ENCODE measurements at regions of chr21 and their contacts with region 1.

Region 1: DNA sequence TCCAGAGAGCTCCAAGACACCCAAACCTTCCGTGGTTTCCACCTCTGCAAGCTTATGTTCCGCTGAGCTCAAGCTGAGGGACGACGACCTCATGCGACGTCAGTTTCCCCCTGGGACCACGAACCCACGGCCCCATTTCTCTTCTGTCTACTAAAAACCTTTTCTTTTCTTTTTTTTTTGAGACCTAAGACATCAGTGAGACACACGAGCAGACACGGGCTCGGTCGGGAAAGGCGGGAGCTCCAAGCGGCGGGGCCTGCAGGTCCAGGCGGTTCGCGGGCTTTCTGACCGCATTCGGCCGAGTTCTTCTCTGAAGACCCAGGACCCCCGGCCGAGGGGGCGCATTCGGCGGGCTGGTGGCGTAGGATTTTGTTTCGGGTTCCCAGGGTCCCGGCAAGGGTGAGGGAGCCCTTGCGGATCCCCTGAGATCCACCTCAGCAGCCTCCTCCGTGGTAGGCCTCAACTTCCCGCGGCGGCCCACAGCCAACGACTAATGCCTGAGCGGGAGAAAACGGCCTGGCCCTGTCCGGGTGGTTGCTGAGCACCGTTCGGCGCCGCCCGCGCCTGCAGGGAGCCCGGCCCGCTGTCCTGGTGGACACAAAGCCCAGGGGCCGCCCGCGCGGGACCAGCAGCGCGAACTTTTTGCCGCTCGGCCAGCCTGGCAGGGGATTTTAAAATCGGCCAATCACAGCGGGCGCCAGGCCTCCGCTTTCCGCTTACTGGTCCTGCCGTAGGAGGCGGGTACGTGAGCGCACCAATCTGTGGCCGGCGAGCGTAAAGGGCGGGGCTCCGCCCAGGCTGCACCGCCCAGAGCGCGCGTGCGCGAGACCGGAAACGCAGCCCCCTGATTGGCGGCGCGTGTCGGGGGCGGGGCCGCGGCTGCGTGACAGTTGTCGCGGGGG is at the start of gene C21orf58:
- DNase-seq: peak; percentile 97 to 98 (median 98)
- H3K4me3 ChIP-seq: peak within 1 kb of the TSS; percentile 83 to 100 (median 96)
- H3K4me3 Mint-ChIP-seq: peak within 1 kb of the TSS; percentile 95 to 96
- H3K27ac ChIP-seq: peak within 1 kb of the TSS; percentile 94
- H3K27ac Mint-ChIP-seq: peak within 1 kb of the TSS; percentile 93 to 99 (median 99)
- H3K4me1 ChIP-seq: peaks cover 43 to 47% of the 10 kb centered on the region in 2 donors
- H3K4me1 Mint-ChIP-seq: peaks cover 47% of the 10 kb centered on the region
- H3K27me3 ChIP-seq: no peaks in the 10 kb centered on the region
- H3K27me3 Mint-ChIP-seq: peaks cover 0 to 3% (median 0%) of the 10 kb centered on the region in 3 donors
- CTCF ChIP-seq: no peak
- polyA plus RNA-seq, gene C21orf58: 0.15 to 0.73 (median 0.21) TPM

Region 2: GRCh38 chr21:46184625-46185555 is 138.6 kb before region 1 on chr21:
- intact Hi-C with region 1: loop called (anchors 5 to 10 kb)
- DNase-seq: peak; percentile 66 to 82 (median 78)
- H3K4me3 ChIP-seq: peak overlapping the region; percentile 49 to 80 (median 63)
- H3K4me3 Mint-ChIP-seq: peak overlapping the region; percentile 85 to 90
- H3K27ac ChIP-seq: peak overlapping the region; percentile 68 to 80
- H3K27ac Mint-ChIP-seq: peak overlapping the region; percentile 89 to 96 (median 95)
- H3K4me1 ChIP-seq: peaks cover 4 to 5% of the 10 kb centered on the region in 2 donors
- H3K4me1 Mint-ChIP-seq: peaks cover 15% of the 10 kb centered on the region
- H3K27me3 ChIP-seq: no peaks in the 10 kb centered on the region
- H3K27me3 Mint-ChIP-seq: peaks cover 0 to 2% (median 0%) of the 10 kb centered on the region in 3 donors
- CTCF ChIP-seq: no peak

Region 3: DNA sequence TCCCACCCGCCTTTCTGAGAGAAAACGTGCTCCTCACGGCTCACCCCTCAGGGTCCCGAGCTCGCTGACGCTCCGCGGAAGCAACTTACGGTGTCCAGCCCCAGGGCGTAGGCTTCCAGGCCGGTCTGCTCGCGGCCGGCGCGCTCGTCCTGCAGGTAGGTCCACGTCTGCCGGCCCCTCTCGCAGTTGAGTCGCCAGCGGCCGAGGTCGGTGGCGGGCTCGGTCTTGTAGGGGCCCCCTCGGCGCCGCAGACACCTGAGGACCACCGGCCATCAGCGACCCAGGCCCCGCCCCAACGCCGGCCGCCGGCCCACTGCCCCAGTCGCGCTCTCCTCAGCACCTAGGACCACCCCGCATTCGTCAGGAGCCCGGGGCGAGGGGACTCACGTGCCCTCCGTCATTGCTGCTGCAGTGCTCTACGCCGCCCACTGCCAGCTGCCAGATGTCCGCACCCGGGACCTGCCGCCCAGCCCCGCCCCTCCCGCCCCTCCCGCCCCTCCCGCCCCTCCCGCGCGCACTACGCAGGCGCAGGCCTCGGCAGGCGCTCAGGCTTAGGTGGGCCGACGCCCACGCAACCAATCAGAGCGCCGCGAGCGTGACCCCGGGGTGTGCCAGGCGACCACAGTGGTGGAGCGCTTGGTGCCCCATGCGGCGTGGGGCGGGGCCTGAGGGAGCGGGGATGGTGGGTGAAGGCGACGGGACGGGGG is 95.0 kb before region 1 on chr21 and contains the start of gene LSS:
- intact Hi-C with region 1: loop called (anchors 2 to 5 kb)
- DNase-seq: peak; percentile 88 to 97 (median 95)
- H3K4me3 ChIP-seq: peak within 1 kb of the TSS; percentile 62 to 90 (median 64)
- H3K4me3 Mint-ChIP-seq: peak within 1 kb of the TSS; percentile 95 to 99
- H3K27ac ChIP-seq: peak within 1 kb of the TSS in 1 of 2 donors; percentile 68
- H3K27ac Mint-ChIP-seq: peak within 1 kb of the TSS; percentile 47 to 89 (median 85)
- H3K4me1 ChIP-seq: peaks cover 17 to 24% of the 10 kb centered on the region in 2 donors
- H3K4me1 Mint-ChIP-seq: peaks cover 34% of the 10 kb centered on the region
- H3K27me3 ChIP-seq: no peaks in the 10 kb centered on the region
- H3K27me3 Mint-ChIP-seq: peaks cover 2 to 7% (median 2%) of the 10 kb centered on the region in 3 donors
- CTCF ChIP-seq: no peak
- polyA plus RNA-seq, gene LSS: 4.1 to 20.0 (median 4.9) TPM

Region 4: GRCh38 chr21:46285761-46286496 is 37.5 kb before region 1 on chr21 and contains the start of gene YBEY:
- intact Hi-C with region 1: loop called (anchors 1 to 5 kb)
- DNase-seq: peak; percentile 79 to 84 (median 81)
- H3K4me3 ChIP-seq: peak within 1 kb of the TSS; percentile 58 to 95 (median 73)
- H3K4me3 Mint-ChIP-seq: peak within 1 kb of the TSS; percentile 89 to 93
- H3K27ac ChIP-seq: peak within 1 kb of the TSS; percentile 85 to 89
- H3K27ac Mint-ChIP-seq: peak within 1 kb of the TSS; percentile 82 to 96 (median 95)
- H3K4me1 ChIP-seq: peaks cover 42 to 55% of the 10 kb centered on the region in 2 donors
- H3K4me1 Mint-ChIP-seq: peaks cover 50% of the 10 kb centered on the region
- H3K27me3 ChIP-seq: no peaks in the 10 kb centered on the region
- H3K27me3 Mint-ChIP-seq: peaks cover 0 to 2% (median 0%) of the 10 kb centered on the region in 3 donors
- CTCF ChIP-seq: no peak
- polyA plus RNA-seq, gene YBEY: 4.1 to 8.6 (median 5.2) TPM

Region 5: GRCh38 chr21:46458315-46459023 is 135.0 kb after region 1 on chr21 and contains the start of gene DIP2A:
- intact Hi-C with region 1: loop called in 1 of 2 experiments (anchors 5 kb)
- DNase-seq: peak; percentile 93 to 97 (median 97)
- H3K4me3 ChIP-seq: peak within 1 kb of the TSS; percentile 88 to 99 (median 96)
- H3K4me3 Mint-ChIP-seq: peak within 1 kb of the TSS; percentile 91 to 93
- H3K27ac ChIP-seq: peak within 1 kb of the TSS; percentile 88 to 93
- H3K27ac Mint-ChIP-seq: peak within 1 kb of the TSS; percentile 87 to 98 (median 93)
- H3K4me1 ChIP-seq: peaks cover 25 to 45% of the 10 kb centered on the region in 2 donors
- H3K4me1 Mint-ChIP-seq: peaks cover 51% of the 10 kb centered on the region
- H3K27me3 ChIP-seq: no peaks in the 10 kb centered on the region
- H3K27me3 Mint-ChIP-seq: peaks cover 0 to 3% (median 0%) of the 10 kb centered on the region in 3 donors
- CTCF ChIP-seq: no peak
- polyA plus RNA-seq, gene DIP2A: 4.6 to 55.4 (median 6.1) TPM

Region 6: DNA sequence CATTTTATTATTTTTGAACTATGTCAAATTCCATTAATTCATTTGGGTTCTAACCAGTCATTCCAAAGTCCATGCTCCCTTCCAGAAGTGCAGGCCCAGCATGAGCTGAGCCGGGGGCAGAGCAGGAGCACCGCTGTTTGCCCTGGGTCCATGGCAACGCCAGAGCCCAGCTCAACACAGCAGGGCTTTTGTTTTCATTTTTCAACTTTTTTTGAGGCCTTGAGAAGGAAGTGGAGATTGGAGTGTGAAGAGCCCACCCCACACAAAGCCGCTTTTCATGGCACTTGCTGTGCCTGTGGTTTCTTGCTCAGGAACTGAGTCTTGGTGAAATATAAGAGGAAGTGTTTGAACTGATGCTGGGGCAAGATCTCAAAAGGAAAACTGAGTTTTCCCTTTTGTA is 298.7 kb after region 1 on chr21:
- intact Hi-C with region 1: no loop called
- DNase-seq: peak; percentile 61 to 70 (median 65)
- H3K4me3 ChIP-seq: peak overlapping the region in 1 of 3 experiments; percentile 23
- H3K4me3 Mint-ChIP-seq: peak overlapping the region; percentile 20 to 71
- H3K27ac ChIP-seq: peak overlapping the region; percentile 77 to 84
- H3K27ac Mint-ChIP-seq: peak overlapping the region; percentile 89 to 97 (median 96)
- H3K4me1 ChIP-seq: peaks cover 42 to 54% of the 10 kb centered on the region in 2 donors
- H3K4me1 Mint-ChIP-seq: peaks cover 50% of the 10 kb centered on the region
- H3K27me3 ChIP-seq: no peaks in the 10 kb centered on the region
- H3K27me3 Mint-ChIP-seq: peaks cover 0 to 2% (median 0%) of the 10 kb centered on the region in 3 donors
- CTCF ChIP-seq: no peak